ENCODE measurements at regions of chr4 and their contacts with region 1.

Region 1: GRCh38 chr4:145618932-145619638 is at the start of gene MMAA:
- DNase-seq: peak; percentile 97
- ATAC-seq: peak; percentile 100
- total RNA-seq, gene MMAA: 8.5 TPM

Region 2: DNA sequence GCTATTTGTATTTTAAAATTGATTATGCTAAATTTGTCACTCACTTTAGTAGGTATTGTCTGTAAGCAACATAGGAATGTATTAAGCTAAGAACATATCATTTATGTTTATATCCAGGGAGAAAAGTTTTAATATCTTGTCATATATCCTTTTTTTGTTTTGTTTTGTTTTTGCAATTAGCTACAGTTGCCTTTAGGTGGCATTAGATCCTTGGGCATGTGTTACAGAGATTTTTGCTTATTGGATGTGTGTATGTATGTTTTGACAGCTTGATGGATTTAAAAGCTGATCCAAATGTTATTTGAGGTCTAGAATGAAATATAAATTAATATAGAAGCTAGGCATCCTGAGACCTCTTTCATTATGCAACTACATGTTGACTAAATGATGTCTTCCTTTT is 402.6 kb before region 1 on chr4:
- intact Hi-C with region 1: loop called (anchors 5 kb)
- DNase-seq: no peak
- ATAC-seq: no peak

Region 3: GRCh38 chr4:145481164-145481941 is 137.7 kb before region 1 on chr4 and contains the start of gene SMAD1:
- intact Hi-C with region 1: loop called (anchors 1 kb)
- DNase-seq: peak; percentile 90
- ATAC-seq: peak; percentile 95
- total RNA-seq, gene SMAD1: 12.0 TPM

Region 4: DNA sequence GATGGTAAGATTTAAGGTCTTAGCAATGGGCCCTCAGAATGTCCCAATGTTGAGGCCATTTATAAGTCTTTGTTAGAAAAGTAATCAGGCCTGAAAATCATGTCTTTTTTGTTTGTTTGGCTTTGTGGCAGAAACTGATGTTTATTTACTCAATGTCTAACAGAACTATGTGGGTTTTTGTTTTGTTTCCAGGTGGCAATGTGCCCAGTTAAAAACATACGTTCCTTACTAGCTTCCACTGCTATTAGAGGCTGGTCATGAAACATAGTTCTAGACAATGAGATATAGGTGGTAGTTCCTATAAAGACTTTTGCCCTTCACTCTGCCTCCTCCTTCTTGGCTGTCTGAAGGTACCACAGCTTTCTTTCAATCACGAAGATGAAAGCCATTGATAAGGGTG is 169.7 kb after region 1 on chr4:
- intact Hi-C with region 1: no loop called
- DNase-seq: no peak
- ATAC-seq: no peak

Region 5: DNA sequence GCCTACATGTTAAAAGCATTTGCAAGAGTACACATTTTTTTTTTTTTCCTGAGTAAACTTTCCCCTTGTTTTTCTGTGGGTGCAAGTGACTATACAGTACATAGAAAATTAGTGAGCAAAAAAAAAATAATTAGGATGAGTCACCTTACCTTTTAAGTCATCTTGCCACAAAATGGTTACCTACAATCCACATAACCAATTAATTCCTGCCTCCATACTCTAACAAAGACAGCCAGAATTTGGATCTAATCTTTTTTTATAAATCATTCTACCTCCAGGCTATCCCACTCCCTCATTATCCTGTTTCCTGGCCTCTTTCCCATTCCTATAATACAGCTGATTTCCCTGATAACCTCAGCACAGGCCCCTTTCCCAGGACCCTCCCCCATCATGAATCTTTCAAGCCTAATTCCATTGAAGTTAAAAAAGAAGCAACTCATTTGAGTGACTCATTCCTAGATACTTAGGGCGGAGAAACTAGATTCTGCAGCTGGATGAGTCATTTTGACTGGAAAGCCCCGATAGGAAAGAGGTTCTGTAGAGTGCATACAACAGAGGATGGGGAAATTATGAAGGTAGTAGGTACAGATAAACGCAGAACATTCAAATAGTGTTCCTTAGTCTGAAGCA is 189.1 kb after region 1 on chr4:
- intact Hi-C with region 1: loop called (anchors 10 kb)
- DNase-seq: no peak
- ATAC-seq: no peak

Region 6: DNA sequence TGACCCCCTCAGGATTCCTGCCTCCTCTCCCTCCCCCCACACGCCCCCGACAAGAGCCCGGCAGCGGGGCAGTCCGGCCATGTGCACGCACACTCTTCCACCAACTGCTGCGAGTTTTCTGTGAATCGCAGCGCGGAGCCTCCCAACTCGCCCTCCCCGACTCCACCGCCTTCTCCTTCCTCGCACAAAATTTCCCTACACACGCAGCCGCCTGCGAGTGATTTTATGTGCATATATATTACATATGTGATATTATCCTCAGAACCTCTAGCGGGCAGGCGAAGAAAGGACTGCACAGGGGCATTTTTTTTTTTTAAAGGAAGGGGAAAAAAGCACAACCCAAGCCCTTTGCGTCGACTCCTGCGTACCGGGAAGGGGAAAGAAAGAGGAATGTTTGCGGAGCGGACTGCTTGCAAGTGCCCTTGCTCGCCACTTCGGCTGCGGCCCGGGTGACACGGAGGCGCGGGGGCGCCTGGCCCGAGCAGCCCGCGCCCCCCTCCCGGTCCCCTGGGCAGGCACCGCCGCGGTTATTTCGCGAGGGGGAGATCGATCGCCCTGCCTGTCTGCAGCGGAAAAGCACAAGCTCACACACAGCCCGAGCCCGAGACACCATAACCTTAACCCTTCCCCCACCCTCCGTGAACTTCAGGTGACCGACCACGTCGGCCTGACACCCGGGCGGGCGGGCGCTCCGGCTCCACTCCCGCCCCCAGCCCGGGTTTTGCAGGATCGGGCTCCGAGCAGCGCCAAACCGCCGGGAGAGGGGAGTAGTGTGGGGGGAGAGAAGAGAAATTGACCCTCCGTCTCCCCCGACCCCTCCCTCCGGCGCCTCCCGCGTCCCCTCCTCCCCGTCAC is 317.3 kb after region 1 on chr4:
- intact Hi-C with region 1: loop called (anchors 1 kb)
- DNase-seq: peak; percentile 76
- ATAC-seq: peak; percentile 63